ENCODE measurements at regions of chr4 and their contacts with region 1.

Region 1: GRCh38 chr4:81844717-81845116 is 373.0 kb upstream of the RASGEF1B start:
- DNase-seq: peak; percentile 9 to 75 (median 62)
- ATAC-seq: peak; percentile 96
- H3K4me3 ChIP-seq: no peak overlapping the region
- H3K4me3 Mint-ChIP-seq: no peak overlapping the region
- H3K27ac ChIP-seq: no peak overlapping the region
- H3K27ac Mint-ChIP-seq: no peak overlapping the region
- H3K4me1 ChIP-seq: no peaks in the 10 kb centered on the region
- H3K4me1 Mint-ChIP-seq: no peaks in the 10 kb centered on the region
- H3K27me3 ChIP-seq: no peaks in the 10 kb centered on the region
- H3K27me3 Mint-ChIP-seq: peaks cover 0 to 3% (median 0%) of the 10 kb centered on the region in 5 donors

Region 2: DNA sequence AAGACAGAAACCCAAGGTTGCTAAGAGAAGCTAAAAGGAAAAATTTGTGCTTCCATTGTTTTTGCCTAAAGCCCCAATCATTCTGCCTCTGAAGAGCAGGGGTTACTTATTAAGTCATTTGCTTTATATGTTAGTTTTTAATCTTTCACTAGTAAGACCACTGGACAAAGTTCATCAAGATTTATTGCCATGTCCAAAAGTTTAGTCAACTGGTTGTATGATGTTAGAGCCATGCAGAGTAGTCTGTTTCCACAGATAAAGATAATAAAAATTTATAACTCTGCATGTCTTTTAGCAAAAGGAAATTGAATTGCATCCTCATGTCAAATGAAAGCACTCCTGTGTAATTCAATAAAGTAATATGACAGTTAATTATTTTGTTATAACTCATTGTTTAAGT is 553.9 kb before region 1 on chr4:
- CTCF ChIA-PET with region 1: no interaction called
- POLR2A ChIA-PET with region 1: no interaction called
- intact Hi-C with region 1: no loop called
- DNase-seq: no peak
- ATAC-seq: no peak
- H3K4me3 ChIP-seq: no peak overlapping the region
- H3K4me3 Mint-ChIP-seq: no peak overlapping the region
- H3K27ac ChIP-seq: no peak overlapping the region
- H3K27ac Mint-ChIP-seq: no peak overlapping the region
- H3K4me1 ChIP-seq: no peaks in the 10 kb centered on the region
- H3K4me1 Mint-ChIP-seq: no peaks in the 10 kb centered on the region
- H3K27me3 ChIP-seq: no peaks in the 10 kb centered on the region
- H3K27me3 Mint-ChIP-seq: peaks cover 0 to 27% (median 16%) of the 10 kb centered on the region in 5 donors

Region 3: GRCh38 chr4:81505004-81505598 is 339.6 kb before region 1 on chr4:
- CTCF ChIA-PET with region 1: no interaction called
- POLR2A ChIA-PET with region 1: no interaction called
- intact Hi-C with region 1: loop called in 1 of 2 experiments (anchors 1 kb)
- DNase-seq: peak; percentile 28 to 79 (median 69)
- ATAC-seq: peak; percentile 86
- H3K4me3 ChIP-seq: peak overlapping the region; percentile 10
- H3K4me3 Mint-ChIP-seq: peak overlapping the region; percentile 7 to 81 (median 68)
- H3K27ac ChIP-seq: peak overlapping the region; percentile 48
- H3K27ac Mint-ChIP-seq: peak overlapping the region; percentile 58 to 96 (median 93)
- H3K4me1 ChIP-seq: peaks cover 10 to 14% of the 10 kb centered on the region in 2 donors
- H3K4me1 Mint-ChIP-seq: peaks cover 22 to 56% (median 31%) of the 10 kb centered on the region in 7 donors
- H3K27me3 ChIP-seq: no peaks in the 10 kb centered on the region
- H3K27me3 Mint-ChIP-seq: peaks cover 0 to 2% (median 0%) of the 10 kb centered on the region in 5 donors

Region 4: DNA sequence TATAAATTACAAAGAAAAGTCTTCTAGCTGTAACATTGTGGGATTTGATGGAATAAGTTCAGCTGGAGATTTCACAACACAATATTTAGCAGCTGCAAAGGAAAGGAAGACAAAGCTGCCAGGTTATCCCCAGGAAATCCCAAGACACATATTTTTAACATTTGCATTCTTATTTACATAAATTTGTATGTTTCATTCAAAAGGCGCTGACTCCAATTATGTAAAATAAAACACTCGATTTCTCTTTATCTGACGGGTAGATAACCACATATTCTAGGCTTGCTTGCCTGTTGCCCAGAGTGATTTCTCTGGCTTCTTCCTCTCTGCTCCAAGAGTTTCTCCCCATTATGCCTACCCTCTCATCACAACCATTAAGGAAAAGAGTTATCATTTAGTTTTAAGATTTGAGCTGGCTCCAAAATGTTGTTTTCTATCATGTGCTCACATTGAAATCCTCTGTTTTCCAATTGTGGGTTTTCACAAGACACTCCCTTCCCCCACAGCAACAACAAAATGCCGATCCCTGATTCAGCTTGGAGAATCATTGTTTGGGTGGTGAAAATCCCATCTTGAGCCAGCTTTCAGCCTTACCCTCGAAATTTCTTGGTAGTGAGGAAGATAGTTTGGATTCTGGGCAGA is 244.9 kb before region 1 on chr4:
- CTCF ChIA-PET with region 1: no interaction called
- POLR2A ChIA-PET with region 1: no interaction called
- intact Hi-C with region 1: loop called in 1 of 2 experiments (anchors 5 kb)
- DNase-seq: no peak
- ATAC-seq: no peak
- H3K4me3 ChIP-seq: no peak overlapping the region
- H3K4me3 Mint-ChIP-seq: no peak overlapping the region
- H3K27ac ChIP-seq: no peak overlapping the region
- H3K27ac Mint-ChIP-seq: no peak overlapping the region
- H3K4me1 ChIP-seq: no peaks in the 10 kb centered on the region
- H3K4me1 Mint-ChIP-seq: peaks cover 0 to under 1% (median 0%) of the 10 kb centered on the region in 7 donors
- H3K27me3 ChIP-seq: no peaks in the 10 kb centered on the region
- H3K27me3 Mint-ChIP-seq: peaks cover 0 to 3% (median 0%) of the 10 kb centered on the region in 5 donors

Region 5: DNA sequence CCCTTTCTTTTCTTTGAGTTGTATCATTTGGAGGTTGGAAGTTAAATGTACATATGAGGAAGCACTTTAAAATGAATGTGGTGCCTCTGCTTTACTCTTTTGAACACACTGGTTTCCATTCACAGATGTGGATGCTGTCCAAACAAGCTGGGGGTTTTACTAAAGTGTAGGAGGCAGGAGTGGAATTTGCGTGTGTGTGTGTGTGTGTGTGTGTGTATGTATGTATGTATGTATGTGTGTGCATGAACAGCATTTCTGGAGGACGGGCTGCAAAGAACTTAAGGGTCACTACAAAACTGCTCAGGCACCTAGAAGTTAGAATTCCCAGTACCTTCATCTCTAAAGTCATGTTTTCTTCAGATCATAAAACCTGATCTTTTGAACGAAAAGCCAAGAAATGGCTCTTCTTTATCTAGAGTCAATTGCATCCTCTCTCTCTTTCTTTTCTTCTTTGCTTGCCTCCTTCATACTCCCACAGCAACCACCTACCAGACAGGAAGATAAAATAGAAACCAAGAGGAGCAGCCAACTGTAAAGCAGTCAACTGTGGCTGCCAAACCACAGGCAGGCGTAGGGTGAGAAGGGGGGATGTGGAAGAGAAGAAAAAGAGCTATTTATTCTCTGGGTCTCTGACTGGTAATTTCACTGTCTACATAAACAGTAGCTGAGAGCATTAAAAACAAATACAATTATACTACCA is 196.0 kb before region 1 on chr4:
- CTCF ChIA-PET with region 1: no interaction called
- POLR2A ChIA-PET with region 1: no interaction called
- intact Hi-C with region 1: loop called in 1 of 2 experiments (anchors 5 kb)
- DNase-seq: peak in 8 of 9 donors; percentile 45 to 71 (median 54)
- ATAC-seq: peak; percentile 93
- H3K4me3 ChIP-seq: no peak overlapping the region
- H3K4me3 Mint-ChIP-seq: peak overlapping the region in 9 of 10 donors; percentile 45 to 71 (median 54)
- H3K27ac ChIP-seq: peak overlapping the region; percentile 0
- H3K27ac Mint-ChIP-seq: peak overlapping the region; percentile 33 to 80 (median 64)
- H3K4me1 ChIP-seq: peaks cover 12 to 16% of the 10 kb centered on the region in 2 donors
- H3K4me1 Mint-ChIP-seq: peaks cover 25 to 59% (median 48%) of the 10 kb centered on the region in 7 donors
- H3K27me3 ChIP-seq: no peaks in the 10 kb centered on the region
- H3K27me3 Mint-ChIP-seq: no peaks in the 10 kb centered on the region

Region 6: DNA sequence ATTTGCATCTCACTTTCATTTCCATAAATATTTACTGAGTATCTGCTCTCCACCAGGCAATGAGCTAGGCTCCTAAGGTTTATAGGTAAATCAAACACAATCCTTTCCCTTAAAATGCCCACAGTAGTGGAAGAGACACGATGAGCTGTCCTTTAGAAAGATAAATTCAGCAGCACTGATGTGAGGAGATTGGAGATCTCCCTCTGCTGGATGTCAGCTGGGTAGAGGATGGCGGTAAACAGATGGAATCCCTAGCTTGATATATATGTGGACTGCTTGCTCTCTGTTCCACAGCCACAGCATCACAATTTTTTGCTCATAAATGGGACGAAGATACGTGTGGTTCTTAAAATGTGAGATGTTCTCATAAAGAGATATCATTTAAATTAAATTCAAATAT is 156.6 kb before region 1 on chr4:
- CTCF ChIA-PET with region 1: interaction called, 5 read pairs
- POLR2A ChIA-PET with region 1: no interaction called
- intact Hi-C with region 1: loop called in 1 of 2 experiments (anchors 1 kb)
- DNase-seq: peak in 4 of 9 donors; percentile 4 to 39 (median 20)
- ATAC-seq: peak; percentile 47
- H3K4me3 ChIP-seq: no peak overlapping the region
- H3K4me3 Mint-ChIP-seq: no peak overlapping the region
- H3K27ac ChIP-seq: no peak overlapping the region
- H3K27ac Mint-ChIP-seq: no peak overlapping the region
- H3K4me1 ChIP-seq: no peaks in the 10 kb centered on the region
- H3K4me1 Mint-ChIP-seq: peaks cover 0 to 2% (median 0%) of the 10 kb centered on the region in 7 donors
- H3K27me3 ChIP-seq: no peaks in the 10 kb centered on the region
- H3K27me3 Mint-ChIP-seq: peaks cover 0 to 7% (median 0%) of the 10 kb centered on the region in 5 donors

Region 7: DNA sequence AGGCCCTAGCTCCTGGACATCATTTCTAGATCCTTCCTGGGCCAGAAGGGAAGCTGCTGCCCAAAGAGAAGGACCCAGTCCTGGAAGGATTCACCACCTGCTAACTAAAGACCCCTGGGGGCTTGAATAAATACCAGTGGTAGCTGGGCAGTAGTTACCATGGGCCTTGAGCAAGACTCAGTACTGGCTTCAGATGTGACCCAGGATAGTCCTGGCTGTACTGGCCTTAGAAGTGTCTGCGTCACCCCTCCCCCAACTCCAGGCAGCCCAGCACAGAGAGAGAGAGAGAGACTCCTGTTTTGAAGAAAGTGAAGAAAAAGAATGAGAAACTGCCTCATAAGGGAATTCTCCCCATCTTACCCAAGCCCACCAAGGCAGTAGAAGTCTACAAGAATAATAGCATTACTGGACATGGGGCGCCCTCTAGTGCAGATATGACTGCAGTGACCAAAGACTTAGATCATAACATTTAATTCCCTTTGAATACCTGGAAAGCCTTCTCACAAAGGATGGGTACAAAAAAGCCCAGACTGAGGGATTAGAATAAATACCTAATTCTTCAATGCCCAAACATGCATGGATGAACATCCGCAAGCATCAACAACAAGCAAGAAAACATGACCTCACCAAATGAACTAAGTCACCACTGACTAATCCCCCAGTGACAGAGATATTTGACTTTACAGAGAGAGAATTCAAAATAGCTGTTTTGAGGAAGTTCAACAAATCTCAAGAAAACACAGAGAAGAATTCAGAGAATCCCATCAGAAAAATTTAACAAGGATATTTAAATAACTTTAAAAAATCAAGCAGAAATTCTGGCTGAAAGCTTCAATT is 357.3 kb after region 1 on chr4:
- CTCF ChIA-PET with region 1: interaction called, 6 read pairs
- POLR2A ChIA-PET with region 1: no interaction called
- intact Hi-C with region 1: loop called (anchors 1 kb)
- DNase-seq: peak in 7 of 9 donors; percentile 30 to 54 (median 40)
- ATAC-seq: peak; percentile 70
- H3K4me3 ChIP-seq: no peak overlapping the region
- H3K4me3 Mint-ChIP-seq: no peak overlapping the region
- H3K27ac ChIP-seq: no peak overlapping the region
- H3K27ac Mint-ChIP-seq: no peak overlapping the region
- H3K4me1 ChIP-seq: no peaks in the 10 kb centered on the region
- H3K4me1 Mint-ChIP-seq: peaks cover 0 to 17% (median 3%) of the 10 kb centered on the region in 7 donors
- H3K27me3 ChIP-seq: peaks cover 0 to 4% of the 10 kb centered on the region in 2 donors
- H3K27me3 Mint-ChIP-seq: peaks cover 0 to 18% (median 0%) of the 10 kb centered on the region in 5 donors

Region 8: GRCh38 chr4:82360298-82361177 is 515.8 kb after region 1 on chr4:
- CTCF ChIA-PET with region 1: no interaction called
- POLR2A ChIA-PET with region 1: no interaction called
- intact Hi-C with region 1: loop called in 1 of 2 experiments (anchors 10 kb)
- DNase-seq: peak in 6 of 9 donors; percentile 17 to 33 (median 31)
- ATAC-seq: peak; percentile 70
- H3K4me3 ChIP-seq: no peak overlapping the region
- H3K4me3 Mint-ChIP-seq: peak overlapping the region in 7 of 10 donors; percentile 0 to 56 (median 36)
- H3K27ac ChIP-seq: peak overlapping the region; percentile 18
- H3K27ac Mint-ChIP-seq: peak overlapping the region in 8 of 9 donors; percentile 34 to 85 (median 54)
- H3K4me1 ChIP-seq: peaks cover 62 to 74% of the 10 kb centered on the region in 2 donors
- H3K4me1 Mint-ChIP-seq: peaks cover 64 to 98% (median 89%) of the 10 kb centered on the region in 7 donors
- H3K27me3 ChIP-seq: no peaks in the 10 kb centered on the region
- H3K27me3 Mint-ChIP-seq: no peaks in the 10 kb centered on the region

Region 9: DNA sequence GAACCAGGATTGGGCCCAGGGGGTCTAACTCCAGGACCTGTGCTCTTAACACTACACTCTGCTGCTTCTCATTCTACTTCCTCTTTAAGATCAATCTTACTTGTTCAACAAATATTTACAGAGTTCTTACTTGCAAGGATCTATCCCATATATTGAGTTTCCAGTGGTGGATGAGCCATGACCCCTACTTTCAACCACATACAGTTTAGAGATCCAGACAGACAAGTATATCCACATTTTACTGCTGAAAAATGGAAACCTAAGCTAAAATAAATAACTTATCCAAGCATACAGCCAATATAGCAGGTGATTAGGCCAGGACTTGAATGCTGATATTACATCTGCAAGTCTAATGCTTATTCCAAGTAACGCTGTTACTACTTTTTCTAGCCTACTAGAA is 698.4 kb after region 1 on chr4:
- CTCF ChIA-PET with region 1: no interaction called
- POLR2A ChIA-PET with region 1: no interaction called
- intact Hi-C with region 1: no loop called
- DNase-seq: no peak
- ATAC-seq: no peak
- H3K4me3 ChIP-seq: no peak overlapping the region
- H3K4me3 Mint-ChIP-seq: no peak overlapping the region
- H3K27ac ChIP-seq: no peak overlapping the region
- H3K27ac Mint-ChIP-seq: no peak overlapping the region
- H3K4me1 ChIP-seq: no peaks in the 10 kb centered on the region
- H3K4me1 Mint-ChIP-seq: peaks cover 0 to 2% (median 0%) of the 10 kb centered on the region in 7 donors
- H3K27me3 ChIP-seq: no peaks in the 10 kb centered on the region
- H3K27me3 Mint-ChIP-seq: peaks cover 6 to 30% (median 15%) of the 10 kb centered on the region in 5 donors

Measured in naive thymus-derived CD4-positive, alpha-beta T cell (primary cell).